ENCODE measurements at regions of chr11 and their contacts with region 1.

Region 1: DNA sequence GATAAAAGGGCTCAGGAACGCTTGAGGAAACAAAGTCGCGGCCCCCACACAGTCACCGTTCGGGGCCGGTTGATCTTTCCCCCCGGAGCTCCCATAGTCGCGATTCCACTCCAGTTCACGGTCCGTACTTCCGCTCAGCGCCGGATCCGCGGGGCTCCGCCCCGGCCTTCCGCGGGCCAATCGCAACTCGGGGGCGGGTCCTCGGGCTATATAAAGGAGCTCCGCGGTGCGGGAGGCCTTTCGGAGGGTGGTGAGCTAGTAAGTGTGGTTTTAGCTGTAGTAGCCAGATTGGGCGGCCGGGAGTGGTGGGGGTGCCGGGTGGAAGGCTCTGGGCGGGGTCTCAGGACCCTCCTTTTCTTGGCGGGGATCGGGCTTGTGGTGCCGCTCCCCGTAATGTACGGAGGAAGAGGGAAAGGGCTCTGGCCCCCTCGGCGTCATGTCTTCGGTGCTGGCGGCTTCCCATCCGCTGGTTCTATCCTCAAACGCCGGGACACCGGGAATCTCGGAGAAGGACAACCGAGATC is at the starts of genes C11orf98 and CSKMT:
- DNase-seq: no peak
- H3K4me3 ChIP-seq: peak within 1 kb of the TSS; percentile 92
- CTCF ChIP-seq: no peak

Region 2: DNA sequence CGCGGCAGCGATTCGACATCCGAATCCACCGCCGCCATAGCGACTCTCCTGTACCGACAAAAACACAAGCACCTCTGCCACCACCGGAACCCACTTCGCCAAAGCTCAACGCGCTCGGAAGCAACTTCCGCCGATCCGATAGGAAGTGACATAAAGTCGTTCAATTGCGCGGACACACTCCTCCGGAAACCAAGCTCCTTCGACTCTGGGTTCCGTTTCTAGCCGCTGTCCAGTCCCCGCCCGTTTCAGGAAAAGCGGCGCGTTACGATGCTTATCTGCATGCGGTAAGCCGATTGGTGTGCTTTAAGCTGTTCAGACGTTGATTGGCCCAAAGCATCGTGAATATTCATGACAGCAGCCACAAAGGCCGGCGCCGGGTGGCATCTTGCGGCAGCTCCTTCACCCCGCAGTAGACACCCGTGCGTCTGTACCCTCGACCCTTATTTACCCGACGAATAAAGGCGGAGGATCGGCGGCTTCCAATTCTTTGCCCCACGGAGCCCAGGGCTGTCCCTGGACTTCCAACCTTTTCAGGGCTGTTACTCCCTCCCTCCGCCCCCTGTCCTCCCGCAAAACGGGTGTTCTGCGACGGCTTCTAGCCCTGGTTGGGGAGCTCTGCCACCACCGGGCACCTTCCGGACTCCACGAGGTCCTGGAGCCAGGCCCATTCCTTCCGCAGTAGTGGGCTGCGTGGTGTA is 73.5 kb before region 1 on chr11 and contains the start of gene TUT1:
- CTCF ChIA-PET with region 1: interaction called, 5 read pairs
- POLR2A ChIA-PET with region 1: interaction called, 40 read pairs
- DNase-seq: peak; percentile 97
- H3K4me3 ChIP-seq: peak within 1 kb of the TSS; percentile 77
- CTCF ChIP-seq: no peak

Region 3: GRCh38 chr11:62645956-62646824 is 18.9 kb before region 1 on chr11 and contains the start of gene GANAB:
- CTCF ChIA-PET with region 1: interaction called, 3 read pairs
- POLR2A ChIA-PET with region 1: interaction called, 46 read pairs
- DNase-seq: peak; percentile 87
- H3K4me3 ChIP-seq: peak within 1 kb of the TSS; percentile 91
- CTCF ChIP-seq: no peak

Region 4: GRCh38 chr11:62689421-62690183 is 24.5 kb after region 1 on chr11 and contains the start of gene LRRN4CL:
- CTCF ChIA-PET with region 1: interaction called, 26 read pairs
- POLR2A ChIA-PET with region 1: interaction called, 43 read pairs
- DNase-seq: no peak
- H3K4me3 ChIP-seq: peak within 1 kb of the TSS; percentile 45
- CTCF ChIP-seq: no peak

Region 5: GRCh38 chr11:62726915-62727763 is 62.0 kb after region 1 on chr11 and contains the start of gene HNRNPUL2:
- CTCF ChIA-PET with region 1: no interaction called
- POLR2A ChIA-PET with region 1: interaction called, 17 read pairs
- DNase-seq: peak; percentile 92
- H3K4me3 ChIP-seq: peak within 1 kb of the TSS; percentile 96
- CTCF ChIP-seq: peak; percentile 4

Region 6: GRCh38 chr11:62855571-62856332 is 190.6 kb after region 1 on chr11:
- CTCF ChIA-PET with region 1: no interaction called
- POLR2A ChIA-PET with region 1: interaction called, 11 read pairs
- DNase-seq: peak; percentile 82
- H3K4me3 ChIP-seq: peak overlapping the region; percentile 92
- CTCF ChIP-seq: no peak